AG04450 (cell line): ENCODE measurements at regions of chr7 and their contacts with region 1.

Region 1: DNA sequence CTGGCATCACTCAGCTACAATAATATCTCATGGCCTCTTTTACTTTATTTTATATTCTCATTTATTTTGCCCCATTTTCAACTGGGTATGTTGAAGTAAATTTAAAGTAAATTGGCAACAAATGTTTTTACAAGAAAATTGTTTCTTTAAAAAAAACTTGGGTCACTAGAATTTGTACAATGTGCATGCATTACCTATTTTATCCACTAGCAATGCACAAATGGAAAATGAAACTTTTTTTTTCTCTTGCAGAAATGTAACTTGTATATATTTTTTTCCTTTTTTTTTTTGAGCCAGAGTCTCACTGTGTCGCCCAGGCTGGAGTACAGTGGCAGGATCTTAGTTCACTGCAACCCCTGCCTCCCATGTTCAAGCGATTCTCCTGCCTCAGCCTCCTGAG is 10.3 kb upstream of the H2AZ2 start:
- DNase-seq: no peak
- H3K4me3 ChIP-seq: no peak overlapping the region
- H3K27ac ChIP-seq: no peak overlapping the region
- H3K27me3 ChIP-seq: no peaks in the 10 kb centered on the region
- CTCF ChIP-seq: peak; percentile 39; the same call in 1 of the 2 replicates

Region 2: DNA sequence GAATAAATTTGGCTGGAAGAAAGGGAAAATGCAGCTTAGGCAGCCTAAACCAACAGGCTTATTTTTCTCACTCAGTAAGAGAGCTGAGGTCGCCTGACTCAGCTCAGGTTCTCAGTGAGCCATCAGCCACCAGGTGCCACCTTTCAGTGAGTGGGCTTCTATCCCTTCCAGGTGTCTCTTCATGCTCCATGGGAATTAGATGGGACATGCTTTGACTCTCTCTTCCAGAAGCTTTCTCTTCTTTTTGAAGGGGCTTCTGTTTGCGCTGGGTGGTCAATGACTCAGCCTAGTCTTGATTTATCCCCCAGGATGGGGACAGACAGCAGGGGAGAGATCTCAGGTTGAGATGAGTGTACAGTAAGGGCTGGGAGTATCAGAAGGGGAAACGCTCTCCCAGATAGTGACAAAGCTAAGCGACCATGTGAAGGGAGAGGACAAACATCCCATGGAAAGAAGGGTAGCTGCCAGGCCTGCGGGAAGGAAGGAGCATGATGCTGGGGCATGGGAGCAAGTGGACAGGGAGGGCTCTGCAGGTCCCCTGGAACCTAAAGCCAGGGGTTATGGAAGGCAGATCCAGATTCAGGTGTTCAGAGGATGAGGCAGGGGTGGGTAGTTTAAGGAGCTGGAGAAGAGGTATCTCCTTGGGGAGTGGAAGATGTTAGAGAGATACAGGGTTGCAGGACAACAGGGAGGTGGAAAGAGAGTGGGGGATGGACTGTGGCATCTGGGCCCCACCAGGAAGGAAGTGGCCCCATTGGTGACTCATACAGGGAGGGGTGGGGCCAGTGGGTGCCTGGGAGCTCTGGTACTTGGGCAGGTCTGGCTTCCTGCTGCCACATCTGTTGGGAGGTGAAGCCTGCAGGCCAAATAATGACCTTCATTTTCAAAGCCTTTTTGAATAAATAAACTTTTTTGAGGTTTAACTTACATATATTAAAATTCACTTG is 219.3 kb before region 1 on chr7:
- CTCF ChIA-PET with region 1: no interaction called
- POLR2A ChIA-PET with region 1: no interaction called
- DNase-seq: no peak
- H3K4me3 ChIP-seq: no peak overlapping the region
- H3K27ac ChIP-seq: peak overlapping the region; percentile 84
- H3K27me3 ChIP-seq: no peaks in the 10 kb centered on the region
- CTCF ChIP-seq: no peak

Region 3: DNA sequence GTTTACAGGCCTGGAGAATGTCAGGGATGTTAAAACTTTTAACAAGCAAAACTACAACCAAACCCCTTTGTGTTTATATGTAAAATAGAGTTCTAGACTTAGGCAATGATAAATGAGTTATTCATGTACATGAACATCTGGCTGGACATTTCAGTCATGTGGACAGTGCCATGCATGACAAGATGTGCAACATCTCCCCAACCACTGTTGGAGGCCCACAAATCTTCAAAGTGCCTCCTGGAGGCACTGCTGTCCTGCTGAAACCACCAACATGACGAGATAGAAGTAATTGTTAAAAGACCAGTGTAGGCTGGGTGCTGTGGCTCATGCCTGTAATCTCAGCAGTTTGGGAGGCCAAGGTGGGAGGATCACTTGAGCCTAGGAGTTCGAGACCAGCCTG is 43.2 kb before region 1 on chr7:
- CTCF ChIA-PET with region 1: no interaction called
- POLR2A ChIA-PET with region 1: no interaction called
- DNase-seq: no peak
- H3K4me3 ChIP-seq: no peak overlapping the region
- H3K27ac ChIP-seq: no peak overlapping the region
- H3K27me3 ChIP-seq: no peaks in the 10 kb centered on the region
- CTCF ChIP-seq: no peak

Region 4: DNA sequence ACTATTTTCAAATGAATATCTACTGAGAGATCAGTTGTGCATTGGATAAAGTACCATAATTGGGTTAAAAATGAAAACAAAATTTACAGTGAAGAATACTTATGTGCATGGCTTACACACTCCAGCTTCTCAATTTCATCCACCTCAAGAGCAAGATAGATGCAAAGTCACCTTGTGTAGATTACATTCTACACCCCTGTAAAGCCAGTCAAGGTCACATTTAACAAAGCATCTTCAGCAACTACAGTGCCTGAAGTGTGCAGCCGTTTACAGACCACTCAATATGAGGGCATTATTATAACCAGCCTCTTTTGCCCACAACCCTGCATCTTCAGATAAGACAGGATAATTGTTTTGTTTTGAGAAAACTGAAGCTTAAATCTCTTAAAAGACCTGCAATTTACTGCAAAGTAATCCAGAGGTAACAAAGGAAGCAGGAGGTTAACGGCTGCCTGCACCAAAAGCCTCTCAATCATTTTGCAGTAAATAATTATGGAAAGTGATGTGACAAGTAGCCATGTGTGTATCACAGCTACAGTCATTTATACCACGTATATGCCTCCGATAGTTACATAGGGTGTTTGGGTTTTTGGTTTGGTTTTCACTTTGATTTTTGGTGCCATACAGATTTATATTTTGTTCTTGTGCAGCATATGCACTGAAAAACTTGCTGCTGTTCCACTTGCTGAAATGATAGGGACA is 22.3 kb after region 1 on chr7:
- CTCF ChIA-PET with region 1: interaction called, 25 read pairs
- POLR2A ChIA-PET with region 1: interaction called, 3 read pairs
- DNase-seq: no peak
- H3K4me3 ChIP-seq: peak overlapping the region; percentile 79
- H3K27ac ChIP-seq: no peak overlapping the region
- H3K27me3 ChIP-seq: no peaks in the 10 kb centered on the region
- CTCF ChIP-seq: no peak

Region 5: DNA sequence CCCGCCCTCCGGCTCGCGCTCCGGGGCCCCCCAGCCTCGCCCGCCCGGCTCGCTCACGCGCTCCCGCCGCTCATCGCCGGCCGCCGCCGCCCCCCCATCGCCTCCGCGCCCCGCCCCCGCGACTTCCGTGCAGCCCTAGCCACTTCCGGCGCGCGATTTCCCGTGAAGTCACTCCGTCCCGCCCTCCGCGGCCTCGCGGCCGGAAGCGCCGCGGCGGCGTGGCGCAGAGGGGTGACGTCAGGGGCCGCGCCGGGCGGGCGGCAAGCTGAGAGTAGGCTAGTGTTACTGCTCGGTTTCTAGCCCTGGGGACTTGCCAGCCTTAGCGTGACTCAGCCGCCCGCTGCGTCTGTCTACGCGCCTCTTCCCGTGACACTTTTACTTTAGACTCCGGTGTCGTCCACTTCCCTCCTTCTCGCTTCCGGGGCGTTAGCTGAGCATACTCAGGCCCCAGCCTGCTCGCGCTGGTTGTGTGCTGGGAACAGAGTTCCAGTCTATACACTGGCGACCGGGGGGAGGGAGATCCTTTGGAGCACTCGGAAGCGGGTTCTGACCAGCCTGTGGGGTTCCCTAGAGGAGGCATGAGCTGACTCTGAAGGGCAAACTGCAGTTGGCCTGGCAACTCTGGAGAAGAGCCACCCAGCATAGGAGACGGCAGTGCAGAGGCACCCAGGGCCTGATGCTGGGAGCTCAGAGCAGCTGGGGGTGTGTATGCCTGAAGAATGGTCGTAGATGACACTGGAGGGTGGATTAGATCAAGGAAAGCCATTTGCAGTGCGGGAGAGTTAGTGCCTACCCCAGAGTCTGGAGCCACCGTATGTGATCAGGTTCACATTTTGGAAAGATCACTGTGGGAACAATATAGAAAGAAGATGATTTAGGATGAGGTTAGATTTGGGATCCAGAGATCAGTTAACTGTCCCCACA is 27.5 kb after region 1 on chr7 and contains the start of gene PURB:
- CTCF ChIA-PET with region 1: interaction called, 25 read pairs
- POLR2A ChIA-PET with region 1: interaction called, 3 read pairs
- DNase-seq: peak; percentile 92
- H3K4me3 ChIP-seq: peak within 1 kb of the TSS; percentile 94
- H3K27ac ChIP-seq: peak within 1 kb of the TSS; percentile 99
- H3K27me3 ChIP-seq: no peaks in the 10 kb centered on the region
- CTCF ChIP-seq: no peak
- polyA plus RNA-seq, gene PURB: 7.6 TPM in 2 replicates

Region 6: GRCh38 chr7:44921607-44922359 is 63.6 kb after region 1 on chr7:
- CTCF ChIA-PET with region 1: interaction called, 35 read pairs
- POLR2A ChIA-PET with region 1: no interaction called
- DNase-seq: peak; percentile 24
- H3K4me3 ChIP-seq: no peak overlapping the region
- H3K27ac ChIP-seq: no peak overlapping the region
- H3K27me3 ChIP-seq: no peaks in the 10 kb centered on the region
- CTCF ChIP-seq: peak; percentile 82

Region 7: GRCh38 chr7:45136106-45137060 is 278.2 kb after region 1 on chr7:
- CTCF ChIA-PET with region 1: interaction called, 62 read pairs
- POLR2A ChIA-PET with region 1: no interaction called
- DNase-seq: peak; percentile 46
- H3K4me3 ChIP-seq: no peak overlapping the region
- H3K27ac ChIP-seq: no peak overlapping the region
- H3K27me3 ChIP-seq: peaks cover 9% of the 10 kb centered on the region
- CTCF ChIP-seq: peak; percentile 90